Left lung (tissue), 14 donors: ENCODE measurements at regions of chr17 and their contacts with region 1.

Region 1: DNA sequence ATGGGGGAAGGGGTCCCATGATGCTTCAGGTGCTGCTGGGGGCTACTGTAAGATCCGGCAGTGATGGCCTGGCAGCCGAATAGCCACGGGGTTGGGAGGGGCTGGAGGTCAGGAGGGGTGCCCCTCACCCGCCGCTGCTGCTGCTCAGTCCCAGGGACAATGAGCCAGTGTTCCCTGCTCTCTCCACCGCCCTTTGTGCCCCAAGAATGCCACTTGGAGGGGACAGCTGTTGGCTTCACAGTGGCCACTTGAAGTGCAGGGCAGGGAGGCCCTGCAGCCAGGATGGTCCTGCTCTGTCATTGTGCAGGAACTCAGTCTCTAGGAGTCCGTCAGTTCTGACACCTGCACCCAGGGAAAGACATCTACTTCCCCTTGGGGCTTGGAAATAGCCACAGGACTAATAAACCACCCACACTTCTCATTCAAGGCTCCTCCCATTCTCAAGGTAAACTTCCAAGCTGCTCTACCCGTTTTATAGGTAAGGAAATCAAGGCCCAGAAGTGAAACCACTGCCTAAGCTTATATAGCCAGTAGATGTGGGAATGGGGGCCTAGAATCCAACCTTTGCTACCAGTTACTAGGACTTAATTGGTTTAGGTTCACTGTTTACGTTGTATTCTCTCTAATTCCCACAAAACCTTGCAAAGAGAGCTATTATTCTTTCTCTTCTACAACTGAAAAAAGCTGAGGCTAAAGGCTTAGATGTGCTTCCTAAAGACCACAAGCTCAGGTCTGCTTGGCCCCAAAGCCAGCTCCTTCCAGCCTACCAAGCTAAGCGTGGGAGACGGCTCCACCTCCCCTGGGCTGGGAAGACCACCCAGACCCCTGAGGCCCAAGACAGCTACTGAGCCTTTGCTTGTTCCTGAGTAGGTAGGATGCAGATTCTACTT is 6.2 kb upstream of the CPSF4L start:
- DNase-seq: no peak
- ATAC-seq: no peak
- H3K4me3 ChIP-seq: no peak overlapping the region
- H3K27ac ChIP-seq: no peak overlapping the region
- H3K4me1 ChIP-seq: peaks cover 0 to 2% of the 10 kb centered on the region in 2 donors
- H3K27me3 ChIP-seq: no peaks in the 10 kb centered on the region
- CTCF ChIP-seq: no peak

Region 2: DNA sequence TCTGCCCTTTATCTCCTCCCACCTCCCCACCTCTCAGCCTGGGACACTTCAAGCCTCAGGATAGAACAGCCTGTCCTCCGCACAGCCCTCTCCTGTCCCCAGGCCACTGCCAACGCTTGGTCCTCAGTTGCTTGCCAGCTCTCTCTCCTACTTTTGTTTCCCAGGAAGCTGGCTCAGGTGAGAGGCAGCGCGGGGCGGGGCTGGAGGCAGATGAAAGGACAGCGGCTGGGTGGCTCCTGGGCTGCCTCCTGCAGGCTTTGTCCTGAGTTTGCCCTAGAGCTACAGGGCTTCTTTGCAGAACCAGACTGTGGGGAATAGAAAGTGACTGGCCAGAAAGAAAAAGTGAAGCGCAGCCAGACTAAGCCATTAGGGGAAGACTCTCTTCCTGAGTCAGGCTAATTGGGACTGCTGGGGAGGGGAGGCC is 92.1 kb after region 1 on chr17:
- intact Hi-C with region 1: loop called in 1 of 2 experiments (anchors 5 kb)
- DNase-seq: peak in 3 of 4 donors; percentile 55 to 87 (median 76)
- ATAC-seq: peak; percentile 93
- H3K4me3 ChIP-seq: no peak overlapping the region
- H3K27ac ChIP-seq: no peak overlapping the region
- H3K4me1 ChIP-seq: peaks cover 0 to 4% of the 10 kb centered on the region in 2 donors
- H3K27me3 ChIP-seq: no peaks in the 10 kb centered on the region
- CTCF ChIP-seq: no peak